Endothelial cell of umbilical vein (primary cell): ENCODE measurements at regions of chr4 and their contacts with region 1.

Region 1: GRCh38 chr4:26583865-26584652 is at the start of gene TBC1D19:
- DNase-seq: peak; percentile 85
- H3K4me3 ChIP-seq: peak within 1 kb of the TSS; percentile 52 to 90 (median 89)
- H3K27ac ChIP-seq: no peak within 1 kb of the TSS
- H3K4me1 ChIP-seq: peaks cover 10% of the 10 kb centered on the region
- H3K27me3 ChIP-seq: peaks cover 2 to 9% of the 10 kb centered on the region in 2 experiments
- CTCF ChIP-seq: no peak
- POLR2A ChIP-seq: peak; percentile 46
- total RNA-seq, gene TBC1D19: 5.9 and 6.1 TPM in 2 replicates

Region 2: GRCh38 chr4:26459054-26459755 is 124.9 kb before region 1 on chr4:
- CTCF ChIA-PET with region 1: no interaction called
- POLR2A ChIA-PET with region 1: no interaction called
- dilution Hi-C with region 1: no loop called
- intact Hi-C with region 1: loop called (anchors 5 kb)
- DNase-seq: peak; percentile 51
- H3K4me3 ChIP-seq: no peak overlapping the region
- H3K27ac ChIP-seq: no peak overlapping the region
- H3K4me1 ChIP-seq: no peaks in the 10 kb centered on the region
- H3K27me3 ChIP-seq: peaks cover 11% of the 10 kb centered on the region in 2 experiments
- CTCF ChIP-seq: peak; percentile 40 to 42
- POLR2A ChIP-seq: no peak

Region 3: DNA sequence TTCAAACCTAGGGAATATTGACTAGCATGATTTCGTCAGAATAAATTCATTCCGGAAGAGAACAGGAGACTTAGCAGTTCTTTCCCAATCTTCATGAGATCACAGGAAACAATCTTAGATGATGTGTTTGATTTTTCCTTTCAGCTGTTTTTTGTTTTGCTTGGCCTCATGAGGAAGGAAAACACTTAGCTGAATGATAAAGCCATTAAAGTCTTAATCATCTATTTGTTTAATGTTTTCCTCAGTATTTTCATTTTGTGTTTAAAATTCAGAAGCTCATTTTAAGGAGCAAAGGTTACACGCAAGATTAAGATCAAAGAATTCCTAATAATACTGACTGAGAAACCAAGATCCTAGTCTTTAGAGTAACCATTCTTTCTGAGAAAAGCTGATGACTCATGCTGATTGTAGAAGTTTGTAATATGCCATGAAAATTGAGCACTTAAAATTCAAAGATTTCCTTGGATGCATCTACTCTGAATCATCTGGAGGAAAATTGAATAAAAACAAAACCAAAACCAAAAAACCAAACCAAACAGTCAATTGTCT is 15.5 kb before region 1 on chr4:
- CTCF ChIA-PET with region 1: interaction called, 16 read pairs
- POLR2A ChIA-PET with region 1: interaction called, 6 read pairs
- dilution Hi-C with region 1: no loop called
- intact Hi-C with region 1: loop called (anchors 1 kb)
- DNase-seq: peak; percentile 77
- H3K4me3 ChIP-seq: no peak overlapping the region
- H3K27ac ChIP-seq: no peak overlapping the region
- H3K4me1 ChIP-seq: peaks cover 24% of the 10 kb centered on the region
- H3K27me3 ChIP-seq: peaks cover 10% of the 10 kb centered on the region in 2 experiments
- CTCF ChIP-seq: no peak
- POLR2A ChIP-seq: no peak